BJ (cell line): ENCODE measurements at regions of chr4 and their contacts with region 1.

Region 1: GRCh38 chr4:7192252-7193029 is at the start of gene SORCS2:
- DNase-seq: no peak
- H3K4me3 ChIP-seq: peak within 1 kb of the TSS; percentile 11; the same call in 1 of the 2 replicates
- H3K27me3 ChIP-seq: peaks cover 42% of the 10 kb centered on the region
- CTCF ChIP-seq: peak; percentile 35
- polyA plus RNA-seq, gene SORCS2: 0.59 and 0.63 TPM in 2 replicates

Region 2: GRCh38 chr4:7206911-7207567 is 14.6 kb after region 1 on chr4:
- CTCF ChIA-PET with region 1: interaction called, 37 read pairs
- POLR2A ChIA-PET with region 1: no interaction called
- DNase-seq: peak; percentile 49
- H3K4me3 ChIP-seq: no peak overlapping the region
- H3K27me3 ChIP-seq: no peaks in the 10 kb centered on the region
- CTCF ChIP-seq: no peak

Region 3: GRCh38 chr4:7295911-7296660 is 103.6 kb after region 1 on chr4:
- CTCF ChIA-PET with region 1: interaction called, 94 read pairs
- POLR2A ChIA-PET with region 1: no interaction called
- DNase-seq: no peak
- H3K4me3 ChIP-seq: no peak overlapping the region
- H3K27me3 ChIP-seq: peaks cover 1% of the 10 kb centered on the region; the same call in 1 of the 2 replicates
- CTCF ChIP-seq: peak; percentile 78

Region 4: GRCh38 chr4:7335344-7336069 is 143.1 kb after region 1 on chr4:
- CTCF ChIA-PET with region 1: interaction called, 26 read pairs
- POLR2A ChIA-PET with region 1: no interaction called
- DNase-seq: no peak
- H3K4me3 ChIP-seq: no peak overlapping the region
- H3K27me3 ChIP-seq: 0 out of 2 replicates have a peak, but pooled peaks cover 1% of the 10 kb centered on the region
- CTCF ChIP-seq: peak; percentile 82

Region 5: DNA sequence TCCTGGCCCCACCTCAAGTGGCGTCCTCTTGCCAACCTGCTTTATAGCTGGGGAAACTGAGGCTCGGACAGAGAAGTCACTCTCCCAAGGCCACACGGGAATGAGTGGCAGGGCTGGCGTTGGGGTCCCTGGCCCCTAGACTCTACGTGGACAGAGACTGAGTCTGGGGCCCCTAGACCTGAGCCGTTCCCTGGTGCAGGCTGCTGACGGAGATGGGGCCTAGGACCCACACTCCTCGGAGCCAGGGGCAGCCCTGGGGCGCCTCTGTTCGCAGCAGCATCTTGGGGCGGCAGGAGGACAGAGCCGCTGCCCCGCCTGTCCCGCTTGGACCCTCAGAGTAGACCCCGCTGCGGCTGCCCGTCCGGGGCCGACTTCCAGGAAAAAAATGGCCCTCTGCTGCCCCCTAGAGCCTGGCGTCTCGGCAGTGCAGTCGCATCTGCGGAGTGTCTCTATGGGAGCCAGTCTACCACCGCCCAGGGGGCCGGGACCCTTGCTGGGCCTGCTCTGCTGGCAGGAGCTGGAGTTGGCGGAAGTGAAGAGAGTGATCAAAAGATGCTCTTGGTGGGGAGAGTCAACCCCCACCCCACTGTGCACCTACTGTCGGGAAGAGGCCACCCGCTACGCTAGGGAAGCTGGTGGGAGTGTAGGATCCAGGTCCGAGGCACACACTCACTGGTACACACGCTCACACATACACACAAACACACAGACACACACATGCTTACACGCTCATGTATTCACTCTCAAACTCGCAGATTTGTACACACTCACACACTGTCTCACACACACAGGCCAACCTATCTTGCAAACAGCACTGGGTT is 527.1 kb after region 1 on chr4:
- CTCF ChIA-PET with region 1: interaction called, 13 read pairs
- POLR2A ChIA-PET with region 1: no interaction called
- DNase-seq: no peak
- H3K4me3 ChIP-seq: no peak overlapping the region
- H3K27me3 ChIP-seq: peaks cover 3% of the 10 kb centered on the region; the same call in 1 of the 2 replicates
- CTCF ChIP-seq: peak; percentile 87